B cell (primary cell): ENCODE measurements at regions of chr2 and their contacts with region 1.

Region 1: DNA sequence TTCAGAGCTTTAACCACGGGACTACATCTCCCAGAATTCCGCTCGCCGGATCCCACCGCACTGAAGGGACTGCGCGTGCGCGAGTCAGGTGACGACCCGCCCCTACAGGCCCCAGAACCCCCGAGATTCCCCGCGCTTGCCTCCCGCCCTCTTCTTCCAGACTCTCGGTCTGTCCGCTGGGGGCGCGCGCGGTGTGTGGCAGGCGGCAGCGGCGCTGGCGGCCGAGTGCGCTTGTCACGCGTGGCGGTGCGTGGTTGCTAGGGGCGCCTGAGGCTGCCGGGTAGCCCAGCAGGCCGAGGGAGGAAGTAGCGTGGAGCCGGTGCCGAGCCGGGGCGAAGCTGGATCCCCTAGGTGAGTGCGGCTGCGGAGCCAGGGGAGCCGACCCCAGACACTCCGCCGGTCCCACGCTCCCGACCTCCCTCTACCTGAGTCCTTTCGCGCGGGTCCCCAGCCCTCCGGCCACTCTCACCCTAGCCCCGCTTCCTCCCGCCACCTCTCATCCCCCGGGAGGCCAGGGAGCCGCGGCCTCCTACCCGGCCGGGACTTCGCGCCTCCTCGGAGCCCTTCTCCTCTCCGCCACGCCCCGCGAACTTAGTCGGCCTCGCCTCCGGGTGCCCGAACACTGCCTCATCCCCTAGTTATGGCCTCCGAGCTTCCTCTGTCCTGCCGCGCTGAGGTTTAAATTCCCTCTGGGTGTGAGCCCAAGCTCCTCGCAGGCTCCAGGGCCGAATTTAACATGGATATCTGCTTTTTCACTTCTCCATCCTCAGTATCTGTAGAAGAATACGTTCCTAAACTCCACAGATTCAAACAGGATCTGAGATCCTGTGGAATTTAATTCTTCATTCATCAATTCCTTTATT is at the start of gene TTLL4:
- DNase-seq: peak; percentile 99
- ATAC-seq: peak; percentile 98
- H3K4me3 ChIP-seq: peak within 1 kb of the TSS; percentile 71 to 94 (median 79)
- H3K4me3 Mint-ChIP-seq: peak within 1 kb of the TSS; percentile 95
- H3K27ac ChIP-seq: peak within 1 kb of the TSS; percentile 64 to 96
- H3K27ac Mint-ChIP-seq: peak within 1 kb of the TSS; percentile 90
- H3K4me1 ChIP-seq: peaks cover 18 to 21% of the 10 kb centered on the region in 2 donors
- H3K4me1 Mint-ChIP-seq: peaks cover 26% of the 10 kb centered on the region
- H3K27me3 ChIP-seq: peaks cover 0 to 2% (median 0%) of the 10 kb centered on the region in 4 experiments
- H3K27me3 Mint-ChIP-seq: peaks cover 3% of the 10 kb centered on the region
- CTCF ChIP-seq: peak; percentile 84
- total RNA-seq, gene TTLL4: 30.6 and 33.8 TPM in 2 replicates

Region 2: DNA sequence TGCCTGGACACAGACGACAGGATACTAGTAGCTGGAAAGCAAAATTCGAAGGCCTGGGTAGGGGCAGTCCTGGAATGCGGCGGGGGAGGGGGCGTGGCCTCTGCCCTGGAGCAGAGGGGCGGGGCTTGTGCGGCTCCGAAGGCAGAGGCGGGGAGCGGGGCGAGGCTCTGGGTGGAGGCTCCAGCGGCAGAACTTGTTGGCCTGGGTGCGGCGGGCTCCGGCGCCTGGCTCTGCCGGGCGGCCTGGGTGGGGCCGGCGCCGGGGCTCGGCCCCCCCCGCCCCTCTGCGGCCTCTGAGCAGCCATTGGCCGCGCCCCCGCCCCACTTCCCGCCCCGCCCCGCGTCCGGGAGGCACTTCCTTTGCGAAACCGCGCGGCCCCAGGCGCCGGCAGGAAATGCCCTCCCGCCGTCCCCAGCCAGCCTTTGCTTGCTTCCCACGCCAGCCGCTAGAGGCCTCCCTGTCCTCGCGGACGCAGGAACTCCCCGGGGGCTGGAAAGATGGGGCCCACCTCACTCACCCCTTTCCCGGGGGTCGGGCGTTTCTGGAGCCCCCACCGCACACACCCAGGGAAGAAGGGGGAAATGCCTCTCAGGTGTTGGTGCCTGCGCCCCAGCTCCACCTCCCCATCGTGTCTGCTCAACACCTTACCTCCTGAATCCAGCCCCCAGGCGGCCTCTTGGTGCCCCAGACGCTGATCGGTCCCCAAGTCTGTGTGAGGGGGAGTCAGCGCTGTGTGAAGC is 304.5 kb before region 1 on chr2:
- CTCF ChIA-PET with region 1: no interaction called
- POLR2A ChIA-PET with region 1: no interaction called
- intact Hi-C with region 1: loop called (anchors 1 kb)
- DNase-seq: peak; percentile 93
- ATAC-seq: peak; percentile 81
- H3K4me3 ChIP-seq: peak overlapping the region; percentile 15 to 72 (median 53)
- H3K4me3 Mint-ChIP-seq: peak overlapping the region; percentile 88
- H3K27ac ChIP-seq: peak overlapping the region; percentile 62 to 82
- H3K27ac Mint-ChIP-seq: peak overlapping the region; percentile 90
- H3K4me1 ChIP-seq: peaks cover 30 to 48% of the 10 kb centered on the region in 2 donors
- H3K4me1 Mint-ChIP-seq: peaks cover 47% of the 10 kb centered on the region
- H3K27me3 ChIP-seq: no peaks in the 10 kb centered on the region
- H3K27me3 Mint-ChIP-seq: no peaks in the 10 kb centered on the region
- CTCF ChIP-seq: peak; percentile 69

Region 3: DNA sequence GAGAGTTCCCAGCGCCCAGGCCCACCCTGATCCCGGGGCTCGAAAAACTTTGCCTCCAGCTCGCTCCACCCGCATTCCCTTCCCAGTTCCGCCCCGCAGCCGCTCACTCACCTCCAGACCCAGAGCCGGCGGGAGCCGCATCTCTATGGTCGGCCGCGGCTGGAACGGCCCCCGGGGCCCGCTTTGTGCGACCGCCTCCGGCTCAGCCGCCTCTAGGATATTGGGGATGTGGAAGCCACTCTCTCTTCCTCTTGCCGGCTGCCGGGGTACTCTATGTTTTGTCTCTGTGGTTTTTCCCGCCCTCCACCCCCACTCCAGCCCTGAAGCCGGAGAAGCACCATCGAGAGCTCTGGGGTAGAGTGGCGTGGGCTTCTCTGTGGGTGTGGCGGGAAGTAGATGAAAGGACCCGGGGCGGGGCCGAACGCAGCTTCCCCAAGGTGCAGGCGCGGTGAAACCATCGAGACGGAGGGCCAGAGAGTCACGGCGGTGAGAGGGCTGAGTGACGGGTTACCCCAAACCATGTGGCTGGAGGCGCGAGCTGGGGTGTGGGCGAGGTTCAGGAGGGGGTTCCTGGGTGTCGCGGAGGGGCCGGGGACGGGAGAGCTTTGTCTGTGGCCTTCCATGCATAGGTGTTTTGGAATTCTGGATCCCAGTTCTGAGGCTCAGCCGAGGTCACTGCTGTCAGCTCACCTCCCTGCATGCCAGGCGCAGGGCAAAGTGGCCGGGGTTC is 51.5 kb before region 1 on chr2 and contains the starts of genes BCS1L and ZNF142:
- CTCF ChIA-PET with region 1: interaction called, 9 read pairs
- POLR2A ChIA-PET with region 1: interaction called, 8 read pairs
- intact Hi-C with region 1: loop called (anchors 1 kb)
- DNase-seq: peak; percentile 91
- ATAC-seq: peak; percentile 97
- H3K4me3 ChIP-seq: peak within 1 kb of the TSS; percentile 65 to 93 (median 81)
- H3K4me3 Mint-ChIP-seq: peak within 1 kb of the TSS; percentile 99
- H3K27ac ChIP-seq: peak within 1 kb of the TSS; percentile 46 to 77
- H3K27ac Mint-ChIP-seq: peak within 1 kb of the TSS; percentile 95
- H3K4me1 ChIP-seq: peaks cover 12 to 16% of the 10 kb centered on the region in 2 donors
- H3K4me1 Mint-ChIP-seq: peaks cover 28% of the 10 kb centered on the region
- H3K27me3 ChIP-seq: no peaks in the 10 kb centered on the region
- H3K27me3 Mint-ChIP-seq: no peaks in the 10 kb centered on the region
- CTCF ChIP-seq: no peak
- total RNA-seq, gene BCS1L: 56.1 and 60.1 TPM in 2 replicates
- total RNA-seq, gene ZNF142: 51.1 and 56.1 TPM in 2 replicates

Region 4: GRCh38 chr2:218852911-218853667 is 142.2 kb after region 1 on chr2:
- CTCF ChIA-PET with region 1: interaction called, 10 read pairs
- POLR2A ChIA-PET with region 1: no interaction called
- intact Hi-C with region 1: loop called (anchors 5 kb)
- DNase-seq: peak; percentile 81
- ATAC-seq: peak; percentile 87
- H3K4me3 ChIP-seq: no peak overlapping the region
- H3K4me3 Mint-ChIP-seq: no peak overlapping the region
- H3K27ac ChIP-seq: no peak overlapping the region
- H3K27ac Mint-ChIP-seq: no peak overlapping the region
- H3K4me1 ChIP-seq: peaks cover 3% of the 10 kb centered on the region in 2 donors
- H3K4me1 Mint-ChIP-seq: no peaks in the 10 kb centered on the region
- H3K27me3 ChIP-seq: peaks cover 0 to 72% (median 27%) of the 10 kb centered on the region in 4 experiments
- H3K27me3 Mint-ChIP-seq: peaks cover 61% of the 10 kb centered on the region
- CTCF ChIP-seq: peak; percentile 82

Region 5: GRCh38 chr2:218898109-218898878 is 187.4 kb after region 1 on chr2:
- CTCF ChIA-PET with region 1: interaction called, 4 read pairs
- POLR2A ChIA-PET with region 1: interaction called, 4 read pairs
- intact Hi-C with region 1: loop called (anchors 5 kb)
- DNase-seq: peak; percentile 87
- ATAC-seq: peak; percentile 18
- H3K4me3 ChIP-seq: peak overlapping the region in 4 of 5 experiments; percentile 66 to 68 (median 68)
- H3K4me3 Mint-ChIP-seq: peak overlapping the region; percentile 87
- H3K27ac ChIP-seq: no peak overlapping the region
- H3K27ac Mint-ChIP-seq: peak overlapping the region; percentile 91
- H3K4me1 ChIP-seq: peaks cover 47 to 54% of the 10 kb centered on the region in 2 donors
- H3K4me1 Mint-ChIP-seq: peaks cover 48% of the 10 kb centered on the region
- H3K27me3 ChIP-seq: peaks cover 0 to 28% (median 18%) of the 10 kb centered on the region in 4 experiments
- H3K27me3 Mint-ChIP-seq: peaks cover 31% of the 10 kb centered on the region
- CTCF ChIP-seq: peak; percentile 99